Gastrocnemius medialis (tissue), 4 donors: ENCODE measurements at regions of chr1 and their contacts with region 1.

Region 1: DNA sequence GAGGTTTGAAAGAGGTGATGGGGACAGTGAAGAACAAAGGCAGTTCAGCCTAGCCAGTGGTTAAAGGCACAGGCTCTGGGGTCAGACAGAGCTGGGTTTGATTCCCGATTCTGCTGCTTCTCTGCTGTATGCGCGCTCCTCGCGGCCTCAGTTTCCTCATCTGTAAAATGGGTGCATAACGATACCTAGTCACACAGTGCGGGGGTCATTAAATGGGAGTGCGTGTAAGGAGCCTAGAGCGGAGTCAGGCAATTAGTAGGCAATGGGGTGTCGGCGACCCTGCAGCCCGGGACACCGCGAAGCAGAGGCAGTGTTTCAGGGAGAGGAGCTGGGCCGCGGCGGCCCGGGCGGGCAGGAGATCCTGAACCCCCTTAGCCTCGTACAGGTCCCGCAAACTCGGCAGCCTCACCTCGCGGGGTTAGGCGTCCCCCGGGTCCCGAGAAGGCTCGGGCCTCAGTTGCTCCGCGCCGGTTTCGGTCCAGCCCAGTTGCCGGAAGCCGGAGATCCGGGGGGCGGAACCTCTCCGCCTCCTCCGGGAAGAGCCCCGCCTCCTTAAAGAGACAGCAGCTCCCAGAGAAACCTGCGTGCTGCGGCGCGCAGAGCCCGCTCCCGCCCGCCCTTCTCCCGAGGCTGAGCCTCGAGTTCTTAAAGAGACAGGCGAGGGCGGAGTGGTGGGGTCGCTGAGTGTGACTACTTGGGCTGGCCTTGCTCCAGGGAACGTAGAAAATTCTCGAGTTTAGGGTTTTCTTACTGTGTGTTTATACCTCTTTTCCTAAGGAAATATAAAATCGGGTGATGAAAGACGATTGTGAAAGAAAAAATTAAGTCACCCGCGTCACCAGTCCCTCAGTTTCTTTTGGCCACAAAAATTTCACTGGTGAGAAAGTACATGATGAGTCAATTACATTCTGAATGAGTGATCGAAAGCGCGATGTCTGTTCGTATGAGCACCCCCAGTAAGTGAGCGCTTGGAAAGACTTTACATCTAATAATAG is at the start of gene YIPF1:
- DNase-seq: peak; percentile 79 to 88
- ATAC-seq: peak; percentile 97 to 98
- H3K4me3 ChIP-seq: peak within 1 kb of the TSS; percentile 90 to 97 (median 95)
- H3K27ac ChIP-seq: peak within 1 kb of the TSS; percentile 76 to 86 (median 80)
- H3K4me1 ChIP-seq: peaks cover 14 to 15% of the 10 kb centered on the region in 2 donors
- H3K27me3 ChIP-seq: no peaks in the 10 kb centered on the region
- CTCF ChIP-seq: no peak
- POLR2A ChIP-seq: peak; percentile 22 to 55
- total RNA-seq, gene YIPF1: 18.8 to 34.8 (median 27.2) TPM

Region 2: GRCh38 chr1:53837924-53838652 is 51.5 kb before region 1 on chr1 and contains the start of gene NDC1:
- in situ Hi-C with region 1: no loop called
- intact Hi-C with region 1: loop called (anchors 1 kb)
- DNase-seq: peak; percentile 86 to 89
- ATAC-seq: peak; percentile 99 to 100
- H3K4me3 ChIP-seq: peak within 1 kb of the TSS; percentile 76 to 89 (median 86)
- H3K27ac ChIP-seq: peak within 1 kb of the TSS; percentile 93 to 99 (median 96)
- H3K4me1 ChIP-seq: peaks cover 13 to 16% of the 10 kb centered on the region in 2 donors
- H3K27me3 ChIP-seq: no peaks in the 10 kb centered on the region
- CTCF ChIP-seq: peak in 4 of 5 experiments; percentile 22 to 42 (median 33)
- POLR2A ChIP-seq: peak; percentile 53 to 70
- total RNA-seq, gene NDC1: 7.6 to 27.0 (median 9.5) TPM

Region 3: DNA sequence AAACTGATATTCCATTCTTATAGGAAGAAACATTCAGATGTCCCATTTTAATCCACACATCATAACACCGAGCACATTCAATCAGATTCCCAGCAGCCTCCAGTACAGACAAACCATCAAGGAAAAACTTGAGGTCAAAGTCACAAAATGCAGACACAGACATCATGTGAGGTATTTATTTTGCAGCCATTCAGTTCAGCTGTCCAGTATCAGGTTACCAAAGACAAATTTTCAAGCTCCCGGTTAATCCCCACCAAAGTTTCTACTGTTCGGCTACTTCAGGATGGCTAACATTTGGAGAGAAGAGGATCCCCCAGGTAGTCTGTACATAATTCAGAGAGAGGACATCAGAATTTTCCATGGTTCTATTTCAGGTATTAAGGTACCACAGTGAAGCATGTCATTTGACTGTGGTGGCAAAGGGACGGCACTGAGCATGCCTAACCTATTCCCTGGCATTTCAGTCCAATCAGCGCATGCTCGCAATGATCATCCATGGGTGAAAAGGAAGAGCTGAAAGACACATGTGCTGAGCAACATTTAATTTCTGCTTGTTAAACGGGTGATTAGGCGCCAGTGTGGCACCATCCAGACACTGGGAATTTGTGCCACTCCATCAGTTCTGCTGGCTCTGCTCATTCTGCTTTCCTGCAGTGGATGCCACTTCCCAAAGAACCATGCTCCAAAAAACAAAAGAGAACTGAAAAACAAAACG is 37.9 kb before region 1 on chr1:
- in situ Hi-C with region 1: no loop called
- intact Hi-C with region 1: no loop called
- DNase-seq: no peak
- ATAC-seq: no peak
- H3K4me3 ChIP-seq: no peak overlapping the region
- H3K27ac ChIP-seq: no peak overlapping the region
- H3K4me1 ChIP-seq: no peaks in the 10 kb centered on the region
- H3K27me3 ChIP-seq: no peaks in the 10 kb centered on the region
- CTCF ChIP-seq: no peak
- POLR2A ChIP-seq: no peak

Region 4: DNA sequence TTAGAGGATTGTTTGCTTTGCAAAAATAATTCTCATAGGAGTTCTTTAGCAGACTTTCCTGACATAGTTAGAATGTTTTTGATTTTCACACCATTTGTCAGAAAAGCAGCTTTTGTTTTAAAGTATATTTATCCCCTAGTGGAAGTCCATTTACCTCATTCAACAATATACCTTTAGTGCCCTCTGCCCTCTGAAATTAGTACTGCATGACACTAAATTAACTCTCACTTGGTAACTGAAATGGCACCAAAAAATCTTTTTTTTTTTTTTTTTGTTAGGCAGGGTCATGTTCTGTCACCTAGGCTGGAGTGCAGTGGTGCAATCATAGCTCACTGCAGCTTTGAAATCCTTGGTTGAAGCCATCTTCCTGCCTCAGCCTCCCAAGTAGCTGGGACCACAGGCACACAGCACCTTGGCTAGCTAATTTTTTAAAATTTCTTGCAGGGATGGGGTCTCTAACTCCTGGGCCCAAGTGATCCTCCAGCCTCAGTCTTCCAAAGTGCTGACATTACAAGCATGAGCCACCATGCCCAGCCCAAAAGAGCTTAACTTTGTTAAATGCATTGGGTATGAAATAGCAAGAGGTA is 70.2 kb after region 1 on chr1:
- in situ Hi-C with region 1: loop called in 1 of 4 experiments (anchors 10 kb)
- intact Hi-C with region 1: no loop called
- DNase-seq: no peak
- ATAC-seq: no peak
- H3K4me3 ChIP-seq: no peak overlapping the region
- H3K27ac ChIP-seq: no peak overlapping the region
- H3K4me1 ChIP-seq: no peaks in the 10 kb centered on the region
- H3K27me3 ChIP-seq: no peaks in the 10 kb centered on the region
- CTCF ChIP-seq: peak in 3 of 5 experiments; percentile 30 to 46 (median 39)
- POLR2A ChIP-seq: no peak

Region 5: GRCh38 chr1:54052934-54053744 is 163.5 kb after region 1 on chr1 and contains the starts of genes TCEANC2 and TMEM59:
- in situ Hi-C with region 1: no loop called
- intact Hi-C with region 1: loop called (anchors 2 kb)
- DNase-seq: peak; percentile 97 to 98
- ATAC-seq: peak; percentile 93 to 94
- H3K4me3 ChIP-seq: peak within 1 kb of the TSS; percentile 82 to 99 (median 96)
- H3K27ac ChIP-seq: peak within 1 kb of the TSS; percentile 98 to 99 (median 98)
- H3K4me1 ChIP-seq: peaks cover 49% of the 10 kb centered on the region in 2 donors
- H3K27me3 ChIP-seq: no peaks in the 10 kb centered on the region
- CTCF ChIP-seq: peak in 1 of 5 experiments; percentile 10
- POLR2A ChIP-seq: peak; percentile 80 to 85
- total RNA-seq, gene TCEANC2: 2.6 to 9.5 (median 7.0) TPM
- total RNA-seq, gene TMEM59: 156 to 248 (median 224) TPM

Region 6: DNA sequence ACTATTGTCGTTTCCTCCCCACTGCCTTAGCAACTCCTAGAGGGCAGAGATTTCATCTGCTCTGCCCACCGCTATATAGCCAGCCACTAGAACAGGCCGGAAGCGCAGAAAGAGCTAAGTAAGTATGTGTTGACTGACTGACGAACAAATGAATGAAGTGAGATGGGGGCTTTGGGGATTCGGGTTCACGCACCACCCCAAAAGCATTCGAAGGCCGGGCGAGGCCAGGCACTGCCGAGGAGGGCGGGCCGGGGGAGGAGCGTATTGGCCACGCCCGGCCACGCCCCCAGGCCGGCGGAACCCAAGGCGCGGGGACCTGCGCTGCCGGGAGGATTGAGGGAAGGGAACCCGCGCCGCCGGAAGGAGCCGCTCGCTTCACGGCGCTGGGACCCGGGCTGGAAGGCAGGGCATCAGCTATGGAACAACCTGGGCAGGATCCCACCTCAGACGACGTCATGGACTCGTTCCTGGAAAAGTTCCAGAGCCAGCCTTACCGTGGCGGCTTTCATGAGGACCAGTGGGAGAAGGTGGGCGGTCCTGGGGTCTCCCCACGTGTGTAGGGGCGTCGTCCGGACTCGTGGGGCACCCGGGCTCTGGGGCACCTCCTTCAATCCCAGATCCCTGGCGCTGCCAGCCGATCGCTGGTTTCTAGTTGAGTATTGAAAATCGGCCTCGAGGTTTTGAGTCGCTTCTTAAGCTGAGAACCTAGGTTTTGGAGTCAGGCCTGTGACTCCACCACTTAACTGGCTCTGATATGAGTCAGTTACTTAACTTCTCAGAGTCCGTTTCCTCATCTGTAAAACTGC is 826.1 kb after region 1 on chr1 and contains the start of gene TTC4:
- in situ Hi-C with region 1: no loop called
- intact Hi-C with region 1: loop called (anchors 5 kb)
- DNase-seq: peak; percentile 59 to 72
- ATAC-seq: peak; percentile 92 to 95
- H3K4me3 ChIP-seq: peak within 1 kb of the TSS; percentile 91 to 98 (median 97)
- H3K27ac ChIP-seq: peak within 1 kb of the TSS; percentile 88 to 94 (median 90)
- H3K4me1 ChIP-seq: peaks cover 12 to 15% of the 10 kb centered on the region in 2 donors
- H3K27me3 ChIP-seq: no peaks in the 10 kb centered on the region
- CTCF ChIP-seq: no peak
- POLR2A ChIP-seq: peak; percentile 77 to 79
- total RNA-seq, gene TTC4: 26.7 to 44.3 (median 31.4) TPM